HEK293 (cell line): ENCODE measurements at regions of chr20 and their contacts with region 1.

Region 1: GRCh38 chr20:13276945-13277541 is 56.0 kb downstream of the ISM1 start:
- H3K4me3 ChIP-seq: no peak overlapping the region
- H3K27ac ChIP-seq: no peak overlapping the region
- H3K4me1 ChIP-seq: no peaks in the 10 kb centered on the region
- CTCF ChIP-seq: no peak

Region 2: DNA sequence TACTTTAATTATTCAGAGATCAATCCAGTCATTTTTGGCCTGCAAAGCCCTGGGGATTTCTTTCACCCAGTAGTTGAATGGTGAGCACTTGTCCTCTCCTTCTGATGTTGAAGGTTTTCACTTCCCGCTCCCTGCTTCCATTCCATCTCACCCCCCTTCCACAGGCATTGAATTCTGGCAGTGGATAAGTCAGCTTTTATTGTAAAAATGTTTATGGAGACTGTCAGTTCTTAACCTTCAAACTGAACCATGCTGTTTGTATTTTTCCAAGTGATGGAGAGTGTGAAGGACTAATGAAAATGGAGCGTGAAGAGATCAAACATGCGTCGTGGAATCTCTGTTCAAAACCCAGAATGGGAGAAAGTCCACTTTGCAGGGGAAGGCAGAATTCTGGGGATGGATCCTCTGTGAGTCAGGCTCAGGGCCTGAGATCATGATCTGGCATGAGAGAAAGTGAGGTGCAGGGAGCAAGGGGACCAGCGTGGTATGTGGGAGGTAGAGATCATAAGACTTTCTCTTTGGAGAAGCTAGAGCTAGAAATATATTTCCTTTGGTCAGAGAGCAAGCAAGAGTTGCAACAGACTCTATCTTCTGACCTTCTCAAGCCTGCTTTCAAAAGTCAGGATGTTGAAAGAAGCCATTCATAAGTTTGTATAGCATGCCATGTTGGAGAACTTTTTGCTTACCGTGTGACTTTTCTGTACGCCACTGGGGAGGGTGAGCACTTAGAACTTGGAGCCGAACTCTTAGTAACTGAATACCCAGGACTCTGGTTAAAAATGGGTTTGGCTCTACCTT is 25.7 kb before region 1 on chr20:
- CTCF ChIA-PET with region 1: no interaction called
- POLR2A ChIA-PET with region 1: no interaction called
- H3K4me3 ChIP-seq: no peak overlapping the region
- H3K27ac ChIP-seq: no peak overlapping the region
- H3K4me1 ChIP-seq: no peaks in the 10 kb centered on the region
- CTCF ChIP-seq: no peak

Region 3: GRCh38 chr20:13261460-13262301 is 15.4 kb before region 1 on chr20:
- CTCF ChIA-PET with region 1: interaction called, 10 read pairs
- POLR2A ChIA-PET with region 1: no interaction called
- H3K4me3 ChIP-seq: no peak overlapping the region
- H3K27ac ChIP-seq: no peak overlapping the region
- H3K4me1 ChIP-seq: no peaks in the 10 kb centered on the region
- CTCF ChIP-seq: peak; percentile 33; the same call in 1 of the 2 replicates